ENCODE measurements at regions of chr3 and their contacts with region 1.

Region 1: DNA sequence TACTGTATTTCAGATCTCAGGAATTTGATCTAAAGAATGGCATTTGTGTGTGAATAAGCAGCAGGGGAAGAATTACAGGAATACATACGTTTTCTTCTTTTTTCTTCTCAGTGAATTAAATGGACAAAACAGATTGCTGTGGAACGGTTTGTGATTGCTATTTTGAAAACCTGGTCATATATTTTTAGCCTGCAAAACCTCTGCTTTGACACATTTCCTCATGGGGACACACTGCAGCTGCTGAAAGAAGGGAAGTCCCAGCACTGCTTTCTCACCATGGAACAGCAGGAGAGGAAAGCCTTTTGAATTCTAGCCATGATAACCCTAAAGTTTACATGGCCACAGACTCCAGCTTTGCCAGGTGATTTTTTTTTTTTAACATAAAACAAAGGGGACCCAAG is 315.0 kb downstream of the OXSM start:
- DNase-seq: no peak
- ATAC-seq: peak; percentile 47

Region 2: DNA sequence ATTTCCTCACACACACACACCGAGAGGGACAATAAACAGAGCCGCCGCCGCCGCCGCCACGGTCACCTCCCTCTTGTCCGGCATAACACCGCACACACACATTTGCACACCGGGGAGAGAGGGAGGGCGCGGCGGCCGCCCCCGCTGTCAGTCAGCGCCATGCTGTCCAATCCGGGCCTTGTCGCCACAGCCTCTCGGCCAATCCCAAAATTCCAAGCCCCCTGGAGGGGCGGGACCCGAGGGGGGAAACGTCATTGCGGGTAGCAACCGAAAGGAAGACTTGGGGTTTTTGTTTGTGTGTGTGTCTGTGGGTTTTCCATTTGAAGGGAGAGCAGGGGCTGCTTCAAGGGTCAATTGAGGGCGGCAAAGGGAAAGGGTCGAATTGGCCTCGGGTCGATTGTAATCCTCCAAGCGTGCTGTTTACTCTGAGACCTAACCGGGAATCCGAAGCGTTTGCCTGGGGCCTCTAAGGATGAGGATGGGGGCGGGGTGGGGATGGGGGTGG is 440.0 kb before region 1 on chr3 and contains the start of gene TOP2B:
- intact Hi-C with region 1: loop called (anchors 5 kb)
- DNase-seq: peak; percentile 97
- ATAC-seq: peak; percentile 99
- total RNA-seq, gene TOP2B: 90.3 TPM

Region 3: GRCh38 chr3:25789596-25790556 is 315.0 kb before region 1 on chr3 and contains the start of gene OXSM:
- intact Hi-C with region 1: loop called (anchors 10 kb)
- DNase-seq: peak; percentile 95
- ATAC-seq: peak; percentile 98
- total RNA-seq, gene OXSM: 14.8 TPM

Region 4: GRCh38 chr3:25957026-25957425 is 147.8 kb before region 1 on chr3:
- intact Hi-C with region 1: loop called (anchors 5 kb)
- DNase-seq: no peak
- ATAC-seq: peak; percentile 76

Region 5: DNA sequence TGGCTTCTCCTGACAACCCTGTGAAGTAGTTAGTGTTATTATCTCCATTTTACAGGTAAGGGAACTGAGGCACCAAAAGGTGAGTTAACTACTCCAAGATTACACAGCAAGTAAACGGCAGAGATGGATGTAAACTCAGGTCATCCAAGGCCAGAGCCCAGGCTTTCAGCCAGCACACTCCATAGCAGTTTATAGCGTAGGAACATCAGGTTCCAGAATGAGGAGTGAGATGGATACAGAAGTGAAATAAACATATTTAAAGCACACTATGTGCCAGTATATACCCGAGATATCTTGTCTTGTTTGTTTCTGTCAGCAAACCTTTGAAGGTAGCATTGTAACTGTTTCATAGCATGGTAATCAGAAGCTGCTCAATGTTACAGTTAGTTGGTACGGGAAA is 36.0 kb before region 1 on chr3:
- intact Hi-C with region 1: loop called (anchors 2 kb)
- DNase-seq: peak; percentile 48
- ATAC-seq: peak; percentile 92

Measured in Right ventricle myocardium inferior (tissue), 1 donor.